Activated CD4-positive, alpha-beta T cell treated with anti-CD3 and anti-CD28 coated beads for 36 hours (primary cell): ENCODE measurements at regions of chr12 and their contacts with region 1.

Region 1: GRCh38 chr12:89225808-89226411 is 126.4 kb downstream of the DUSP6 start:
- DNase-seq: peak; percentile 71
- ATAC-seq: peak; percentile 80
- H3K4me3 Mint-ChIP-seq: peak overlapping the region; percentile 58
- H3K27ac Mint-ChIP-seq: peak overlapping the region; percentile 99
- H3K4me1 Mint-ChIP-seq: peaks cover 68% of the 10 kb centered on the region
- H3K27me3 Mint-ChIP-seq: no peaks in the 10 kb centered on the region

Region 2: DNA sequence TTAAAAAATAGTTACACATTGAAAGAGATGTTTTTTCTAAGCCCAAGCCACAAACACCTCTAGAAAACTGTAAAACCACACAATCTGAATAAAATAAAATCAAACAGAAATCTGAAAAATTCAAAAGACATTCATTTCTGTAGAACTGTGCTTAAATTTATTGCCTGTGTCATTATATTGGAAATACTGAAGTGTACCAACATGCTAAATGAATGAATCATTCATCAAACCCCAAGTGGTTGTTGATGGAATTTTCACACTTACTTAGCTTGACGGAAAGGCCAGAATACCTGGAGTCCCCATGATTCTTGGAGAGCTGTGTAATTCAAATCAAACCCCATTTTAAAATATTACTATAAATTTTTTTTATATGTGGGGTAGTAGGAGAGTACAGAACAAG is 648.4 kb before region 1 on chr12:
- CTCF ChIA-PET with region 1: no interaction called
- POLR2A ChIA-PET with region 1: no interaction called
- intact Hi-C with region 1: no loop called
- DNase-seq: no peak
- ATAC-seq: no peak
- H3K4me3 Mint-ChIP-seq: no peak overlapping the region
- H3K27ac Mint-ChIP-seq: no peak overlapping the region
- H3K4me1 Mint-ChIP-seq: peaks cover 9% of the 10 kb centered on the region
- H3K27me3 Mint-ChIP-seq: peaks cover 31% of the 10 kb centered on the region

Region 3: GRCh38 chr12:89073027-89073398 is 152.9 kb before region 1 on chr12:
- CTCF ChIA-PET with region 1: interaction called, 5 read pairs
- POLR2A ChIA-PET with region 1: interaction called, 4 read pairs
- intact Hi-C with region 1: loop called (anchors 1 kb)
- DNase-seq: peak; percentile 42
- ATAC-seq: peak; percentile 20
- H3K4me3 Mint-ChIP-seq: no peak overlapping the region
- H3K27ac Mint-ChIP-seq: peak overlapping the region; percentile 91
- H3K4me1 Mint-ChIP-seq: peaks cover 44% of the 10 kb centered on the region
- H3K27me3 Mint-ChIP-seq: no peaks in the 10 kb centered on the region

Region 4: GRCh38 chr12:89092297-89092696 is 133.6 kb before region 1 on chr12:
- CTCF ChIA-PET with region 1: no interaction called
- POLR2A ChIA-PET with region 1: no interaction called
- intact Hi-C with region 1: loop called (anchors 1 to 5 kb)
- DNase-seq: peak; percentile 53
- ATAC-seq: peak; percentile 90
- H3K4me3 Mint-ChIP-seq: no peak overlapping the region
- H3K27ac Mint-ChIP-seq: peak overlapping the region; percentile 85
- H3K4me1 Mint-ChIP-seq: peaks cover 27% of the 10 kb centered on the region
- H3K27me3 Mint-ChIP-seq: no peaks in the 10 kb centered on the region

Region 5: GRCh38 chr12:89179983-89180382 is 45.9 kb before region 1 on chr12:
- CTCF ChIA-PET with region 1: interaction called, 5 read pairs
- POLR2A ChIA-PET with region 1: interaction called, 11 read pairs
- intact Hi-C with region 1: loop called (anchors 1 kb)
- DNase-seq: no peak
- ATAC-seq: no peak
- H3K4me3 Mint-ChIP-seq: no peak overlapping the region
- H3K27ac Mint-ChIP-seq: peak overlapping the region; percentile 71
- H3K4me1 Mint-ChIP-seq: peaks cover 33% of the 10 kb centered on the region
- H3K27me3 Mint-ChIP-seq: no peaks in the 10 kb centered on the region

Region 6: GRCh38 chr12:89244536-89244935 is 18.6 kb after region 1 on chr12:
- CTCF ChIA-PET with region 1: interaction called, 12 read pairs
- POLR2A ChIA-PET with region 1: interaction called, 18 read pairs
- intact Hi-C with region 1: loop called (anchors 1 kb)
- DNase-seq: peak; percentile 48
- ATAC-seq: peak; percentile 88
- H3K4me3 Mint-ChIP-seq: peak overlapping the region; percentile 27
- H3K27ac Mint-ChIP-seq: peak overlapping the region; percentile 84
- H3K4me1 Mint-ChIP-seq: peaks cover 38% of the 10 kb centered on the region
- H3K27me3 Mint-ChIP-seq: no peaks in the 10 kb centered on the region

Region 7: DNA sequence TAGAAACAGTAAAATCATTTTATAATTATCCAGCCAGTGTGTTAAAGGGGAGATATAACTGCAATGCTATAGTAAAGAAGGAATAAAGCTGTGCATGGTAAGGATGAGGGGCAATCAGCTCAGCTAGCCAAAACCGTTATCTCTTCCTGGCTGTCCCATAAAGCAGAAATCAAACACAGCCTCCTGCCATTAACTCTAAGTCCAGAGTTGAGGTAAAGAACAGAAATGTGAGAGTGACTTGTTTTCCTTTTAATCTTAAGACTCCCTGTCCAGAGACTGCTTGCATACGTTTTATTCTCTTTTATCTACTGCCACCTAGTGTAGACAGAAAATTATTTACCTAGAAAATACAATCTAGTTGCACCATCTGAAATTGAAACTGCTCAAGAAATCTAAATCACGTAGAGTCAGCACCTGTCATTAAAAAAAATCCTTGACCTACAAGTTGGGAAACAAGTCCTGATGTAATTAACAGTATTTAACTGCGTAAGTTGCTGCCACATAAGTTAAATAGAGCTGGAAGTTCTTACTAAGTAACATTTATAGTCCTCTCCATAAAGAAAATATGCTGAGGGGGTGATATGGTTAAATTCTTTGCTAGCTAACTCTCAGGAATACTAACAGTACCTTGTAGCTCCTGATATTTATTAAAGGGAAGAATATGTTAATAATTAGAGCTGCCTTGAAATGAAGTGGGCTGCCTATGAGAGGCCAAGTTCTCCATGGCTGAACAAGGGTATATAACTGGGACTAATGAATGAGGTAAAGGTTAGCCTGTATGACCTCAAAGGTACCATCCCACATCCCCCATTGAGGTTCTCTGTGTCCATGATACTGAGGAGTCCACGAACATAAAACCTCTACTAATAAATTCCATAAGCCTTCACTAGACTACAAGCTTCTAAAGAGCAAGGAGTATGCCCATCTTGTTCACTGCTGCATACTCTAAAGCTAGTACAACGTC is 236.0 kb after region 1 on chr12:
- CTCF ChIA-PET with region 1: interaction called, 4 read pairs
- POLR2A ChIA-PET with region 1: no interaction called
- intact Hi-C with region 1: loop called (anchors 2 to 5 kb)
- DNase-seq: no peak
- ATAC-seq: peak; percentile 93
- H3K4me3 Mint-ChIP-seq: peak overlapping the region; percentile 13
- H3K27ac Mint-ChIP-seq: peak overlapping the region; percentile 68
- H3K4me1 Mint-ChIP-seq: peaks cover 20% of the 10 kb centered on the region
- H3K27me3 Mint-ChIP-seq: no peaks in the 10 kb centered on the region